ENCODE measurements at regions of chr19 and their contacts with region 1.

Region 1: DNA sequence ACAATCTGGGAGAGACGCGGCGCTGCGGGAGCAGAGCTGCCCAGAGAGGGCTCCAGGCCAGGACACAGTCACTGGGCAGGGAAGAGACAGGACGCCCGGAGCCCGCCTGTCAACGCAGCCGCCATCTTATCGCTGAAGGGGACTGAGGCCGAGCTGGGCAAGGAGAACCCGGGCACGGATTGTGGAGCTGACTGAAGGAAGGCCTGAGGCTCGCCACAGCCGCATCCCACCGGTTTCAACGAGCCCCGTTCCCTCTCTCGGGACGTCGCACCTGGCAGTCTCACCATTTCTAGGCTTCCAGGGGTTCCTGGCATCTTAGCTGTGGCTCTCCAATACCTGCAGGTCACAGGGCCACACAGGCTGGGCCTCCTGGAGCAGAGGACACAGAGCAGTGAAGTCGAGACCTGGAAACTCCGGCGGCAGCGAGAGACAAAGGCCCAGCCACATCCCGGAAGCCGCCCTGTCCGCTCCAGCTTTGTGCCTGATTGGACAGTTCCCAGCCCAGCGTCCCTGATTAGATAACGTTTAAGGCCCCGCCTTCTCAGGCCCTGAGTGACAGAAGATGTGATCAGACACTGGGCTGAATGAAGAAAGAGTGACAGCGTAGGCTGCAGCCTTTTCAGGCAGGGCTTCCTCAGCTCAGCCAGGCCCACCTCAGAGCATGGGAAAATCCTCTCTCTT is at the start of gene ZNF91:
- DNase-seq: peak; percentile 76
- ATAC-seq: peak; percentile 96
- H3K4me3 Mint-ChIP-seq: peak within 1 kb of the TSS; percentile 99
- H3K27ac Mint-ChIP-seq: peak within 1 kb of the TSS; percentile 98
- H3K4me1 Mint-ChIP-seq: peaks cover 40% of the 10 kb centered on the region
- H3K27me3 Mint-ChIP-seq: no peaks in the 10 kb centered on the region
- CTCF ChIP-seq: no peak
- total RNA-seq, gene ZNF91: 56.4 and 70.9 TPM in 2 replicates

Region 2: GRCh38 chr19:23116802-23117571 is 278.2 kb before region 1 on chr19 and contains the start of gene ZNF730:
- CTCF ChIA-PET with region 1: no interaction called
- POLR2A ChIA-PET with region 1: interaction called, 4 read pairs
- intact Hi-C with region 1: loop called (anchors 5 kb)
- DNase-seq: peak; percentile 55
- ATAC-seq: peak; percentile 99
- H3K4me3 Mint-ChIP-seq: peak within 1 kb of the TSS; percentile 91
- H3K27ac Mint-ChIP-seq: peak within 1 kb of the TSS; percentile 24
- H3K4me1 Mint-ChIP-seq: peaks cover 11% of the 10 kb centered on the region
- H3K27me3 Mint-ChIP-seq: no peaks in the 10 kb centered on the region
- CTCF ChIP-seq: no peak
- total RNA-seq, gene ZNF730: 1.3 and 1.5 TPM in 2 replicates

Region 3: GRCh38 chr19:23262920-23263319 is 132.3 kb before region 1 on chr19:
- CTCF ChIA-PET with region 1: no interaction called
- POLR2A ChIA-PET with region 1: no interaction called
- intact Hi-C with region 1: no loop called
- DNase-seq: no peak
- ATAC-seq: no peak
- H3K4me3 Mint-ChIP-seq: no peak overlapping the region
- H3K27ac Mint-ChIP-seq: no peak overlapping the region
- H3K4me1 Mint-ChIP-seq: no peaks in the 10 kb centered on the region
- H3K27me3 Mint-ChIP-seq: no peaks in the 10 kb centered on the region
- CTCF ChIP-seq: no peak

Region 4: GRCh38 chr19:23273590-23274413 is 121.4 kb before region 1 on chr19:
- CTCF ChIA-PET with region 1: no interaction called
- POLR2A ChIA-PET with region 1: interaction called, 34 read pairs
- intact Hi-C with region 1: loop called (anchors 1 kb)
- DNase-seq: peak; percentile 89
- ATAC-seq: peak; percentile 98
- H3K4me3 Mint-ChIP-seq: peak overlapping the region; percentile 97
- H3K27ac Mint-ChIP-seq: peak overlapping the region; percentile 90
- H3K4me1 Mint-ChIP-seq: peaks cover 30% of the 10 kb centered on the region
- H3K27me3 Mint-ChIP-seq: no peaks in the 10 kb centered on the region
- CTCF ChIP-seq: no peak

Region 5: GRCh38 chr19:23758187-23759074 is 363.2 kb after region 1 on chr19 and contains the start of gene ZNF681:
- CTCF ChIA-PET with region 1: no interaction called
- POLR2A ChIA-PET with region 1: interaction called, 11 read pairs
- intact Hi-C with region 1: loop called (anchors 2 kb)
- DNase-seq: peak; percentile 66
- ATAC-seq: peak; percentile 86
- H3K4me3 Mint-ChIP-seq: peak within 1 kb of the TSS; percentile 98
- H3K27ac Mint-ChIP-seq: peak within 1 kb of the TSS; percentile 93
- H3K4me1 Mint-ChIP-seq: peaks cover 19% of the 10 kb centered on the region
- H3K27me3 Mint-ChIP-seq: no peaks in the 10 kb centered on the region
- CTCF ChIP-seq: no peak
- total RNA-seq, gene ZNF681: 5.5 and 8.3 TPM in 2 replicates

Region 6: GRCh38 chr19:24033301-24033962 is 638.3 kb after region 1 on chr19:
- CTCF ChIA-PET with region 1: no interaction called
- POLR2A ChIA-PET with region 1: interaction called, 20 read pairs
- intact Hi-C with region 1: loop called (anchors 1 kb)
- DNase-seq: peak; percentile 63
- ATAC-seq: peak; percentile 97
- H3K4me3 Mint-ChIP-seq: peak overlapping the region; percentile 100
- H3K27ac Mint-ChIP-seq: peak overlapping the region; percentile 97
- H3K4me1 Mint-ChIP-seq: peaks cover 42% of the 10 kb centered on the region
- H3K27me3 Mint-ChIP-seq: no peaks in the 10 kb centered on the region
- CTCF ChIP-seq: no peak

Measured in activated B cell treated with CpG ODN at 0.5 μM for 24 hours (primary cell).